ENCODE measurements at regions of chr18 and their contacts with region 1.

Region 1: DNA sequence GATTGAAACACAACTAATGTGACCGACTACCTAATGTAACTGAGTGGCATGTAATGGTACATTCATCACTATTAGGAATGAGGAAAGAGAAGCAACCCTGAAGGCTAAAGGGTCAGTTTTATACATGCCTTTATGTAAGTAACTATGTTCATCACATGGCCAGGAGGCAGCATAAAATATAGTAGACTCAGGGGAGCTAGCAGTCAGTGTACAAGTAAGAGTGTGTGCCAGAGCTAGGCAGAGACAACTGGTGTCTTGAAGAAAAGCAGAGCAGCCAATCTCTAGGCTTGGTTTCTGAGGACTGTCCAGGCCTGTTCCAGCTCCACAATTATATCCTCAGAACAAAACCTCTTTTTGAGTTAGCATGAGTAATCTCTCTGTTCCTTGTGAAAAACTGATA is 18.1 kb downstream of the SMAD2 start:
- DNase-seq: no peak
- H3K4me3 Mint-ChIP-seq: peak overlapping the region; percentile 73
- H3K27ac Mint-ChIP-seq: peak overlapping the region; percentile 93
- H3K4me1 Mint-ChIP-seq: peaks cover 81% of the 10 kb centered on the region
- H3K27me3 Mint-ChIP-seq: no peaks in the 10 kb centered on the region

Region 2: DNA sequence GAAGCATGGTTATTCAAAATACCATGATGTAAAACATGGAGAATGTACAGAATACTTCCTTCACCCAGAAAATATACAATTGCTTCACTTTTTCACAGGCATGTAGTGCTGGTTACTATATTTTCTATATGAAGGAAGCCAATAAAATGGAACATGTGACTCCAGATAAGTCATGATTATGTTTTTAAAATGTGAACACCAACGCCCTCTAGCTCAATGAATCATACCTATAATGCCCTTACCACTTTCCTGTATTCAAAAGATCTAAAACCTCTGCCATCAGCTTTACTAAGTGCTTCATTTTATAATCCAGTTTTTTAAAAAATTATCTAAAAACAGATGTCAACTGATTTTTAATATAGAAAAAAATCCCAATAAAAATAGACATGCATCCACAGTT is 41.7 kb before region 1 on chr18:
- intact Hi-C with region 1: loop called (anchors 5 kb)
- DNase-seq: no peak
- H3K4me3 Mint-ChIP-seq: no peak overlapping the region
- H3K27ac Mint-ChIP-seq: peak overlapping the region; percentile 4
- H3K4me1 Mint-ChIP-seq: peaks cover 34% of the 10 kb centered on the region
- H3K27me3 Mint-ChIP-seq: no peaks in the 10 kb centered on the region

Region 3: GRCh38 chr18:47901624-47902362 is 10.6 kb before region 1 on chr18:
- intact Hi-C with region 1: loop called (anchors 1 kb)
- DNase-seq: peak; percentile 22
- H3K4me3 Mint-ChIP-seq: peak overlapping the region; percentile 31
- H3K27ac Mint-ChIP-seq: peak overlapping the region; percentile 75
- H3K4me1 Mint-ChIP-seq: peaks cover 89% of the 10 kb centered on the region
- H3K27me3 Mint-ChIP-seq: no peaks in the 10 kb centered on the region

Region 4: GRCh38 chr18:48050161-48050560 is 137.8 kb after region 1 on chr18:
- intact Hi-C with region 1: no loop called
- DNase-seq: no peak
- H3K4me3 Mint-ChIP-seq: no peak overlapping the region
- H3K27ac Mint-ChIP-seq: no peak overlapping the region
- H3K4me1 Mint-ChIP-seq: no peaks in the 10 kb centered on the region
- H3K27me3 Mint-ChIP-seq: peaks cover 10% of the 10 kb centered on the region

Measured in activated T-helper 1 cell treated with anti-CD3 and anti-CD28 coated beads, Interleukin-12 subunit alpha, Interleukin-12 subunit beta, Interleukin-2, Interleukin-4 antibody, amounts not matched to agents 30 ng/mL and 10 ng/mL and 1 ng/mL, durations not matched to agents 14 hours and 24 hours and 36 hours (primary cell).